ENCODE measurements at regions of chr7 and their contacts with region 1.

Region 1: GRCh38 chr7:66748822-66749221 is 8.3 kb downstream of the RABGEF1 start:
- DNase-seq: peak; percentile 67 to 88 (median 74)
- ATAC-seq: peak; percentile 90 to 96 (median 92)
- H3K4me3 ChIP-seq: no peak overlapping the region
- H3K27ac ChIP-seq: peak overlapping the region in 10 of 12 donors; percentile 5 to 64 (median 28)
- H3K4me1 ChIP-seq: peaks cover 0 to 34% (median 16%) of the 10 kb centered on the region in 12 donors
- H3K27me3 ChIP-seq: no peaks in the 10 kb centered on the region
- CTCF ChIP-seq: no peak
- POLR2A ChIP-seq: no peak

Region 2: DNA sequence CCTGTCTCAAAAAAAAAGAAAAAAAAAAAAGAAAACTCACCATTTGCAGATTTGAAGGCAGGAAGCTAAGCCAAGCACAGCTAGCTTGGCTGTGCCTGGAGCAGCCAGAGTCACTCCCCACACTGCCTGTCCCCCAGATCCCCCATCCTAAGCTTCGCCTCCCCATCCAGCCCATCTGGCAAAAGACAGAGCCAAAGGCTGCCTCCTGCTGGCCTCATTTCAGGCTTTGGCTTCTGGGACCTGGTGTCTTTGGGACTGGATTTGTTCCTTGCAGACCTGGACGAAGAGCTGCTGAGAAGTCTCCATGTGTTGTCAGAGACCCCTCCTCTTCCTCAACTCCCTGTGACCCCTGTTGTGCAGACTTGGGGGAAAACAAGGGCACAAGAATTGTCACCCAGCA is 665.1 kb before region 1 on chr7:
- intact Hi-C with region 1: loop called in 1 of 10 experiments (anchors 5 kb)
- DNase-seq: no peak
- ATAC-seq: no peak
- H3K4me3 ChIP-seq: no peak overlapping the region
- H3K27ac ChIP-seq: no peak overlapping the region
- H3K4me1 ChIP-seq: no peaks in the 10 kb centered on the region
- H3K27me3 ChIP-seq: no peaks in the 10 kb centered on the region
- CTCF ChIP-seq: no peak
- POLR2A ChIP-seq: no peak

Region 3: DNA sequence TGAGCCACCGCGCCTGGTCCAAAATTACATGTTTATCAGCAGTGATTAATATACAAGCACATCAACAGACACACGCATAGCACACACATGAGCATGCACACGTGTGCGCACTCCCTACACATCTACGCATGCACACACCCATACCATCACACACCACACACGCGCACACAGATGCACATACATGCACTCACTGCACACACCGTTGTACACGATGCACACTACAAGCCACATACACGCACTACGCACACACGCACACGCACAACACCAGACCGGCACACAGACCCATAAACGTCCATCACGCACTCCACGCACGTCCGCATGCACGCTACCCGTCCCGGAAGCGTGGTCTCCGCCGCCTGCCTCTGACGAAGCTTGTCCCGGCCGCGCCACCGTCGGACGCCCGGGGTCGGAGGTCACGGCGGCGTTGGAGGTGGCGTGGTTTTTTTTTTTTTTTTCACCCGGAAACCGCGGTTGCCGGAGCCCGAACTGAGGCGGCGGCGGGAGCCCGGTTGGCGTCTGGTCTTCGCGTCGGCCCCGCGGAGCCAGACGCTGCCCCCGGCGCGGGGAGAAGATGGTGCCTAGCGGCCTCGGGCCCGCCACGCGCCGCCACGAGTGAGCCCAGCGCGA is 172.1 kb after region 1 on chr7 and contains the start of gene TMEM248:
- intact Hi-C with region 1: no loop called
- DNase-seq: peak; percentile 91 to 96 (median 92)
- ATAC-seq: peak; percentile 94 to 98 (median 98)
- H3K4me3 ChIP-seq: peak within 1 kb of the TSS; percentile 90 to 100 (median 96)
- H3K27ac ChIP-seq: peak within 1 kb of the TSS; percentile 17 to 87 (median 77)
- H3K4me1 ChIP-seq: peaks cover 3 to 40% (median 26%) of the 10 kb centered on the region in 12 donors
- H3K27me3 ChIP-seq: no peaks in the 10 kb centered on the region
- CTCF ChIP-seq: no peak
- POLR2A ChIP-seq: peak in 1 of 2 donors; percentile 40
- total RNA-seq, gene TMEM248: 34.6 to 121 (median 55.2) TPM

Region 4: DNA sequence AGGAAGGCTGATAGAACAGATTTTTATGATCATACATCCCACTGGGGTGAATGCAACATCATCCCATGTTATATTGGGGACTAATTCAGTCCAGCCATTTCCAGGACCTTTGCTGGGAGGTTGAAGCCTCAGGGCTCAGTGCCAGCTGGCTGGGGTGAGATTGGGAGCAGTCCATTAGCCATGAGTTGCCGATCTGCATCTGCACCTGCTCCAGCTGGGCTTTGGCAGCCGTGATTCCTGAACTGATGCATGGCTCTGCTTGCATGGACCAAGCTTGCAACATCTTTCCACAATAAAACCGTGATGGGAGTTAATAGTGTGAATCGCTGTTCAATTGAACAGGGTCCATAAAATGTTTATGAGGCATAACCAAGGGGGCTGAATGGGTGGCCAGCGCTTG is 594.8 kb after region 1 on chr7:
- intact Hi-C with region 1: no loop called
- DNase-seq: peak in 2 of 5 donors; percentile 18 to 48
- ATAC-seq: peak in 1 of 4 donors; percentile 23
- H3K4me3 ChIP-seq: no peak overlapping the region
- H3K27ac ChIP-seq: no peak overlapping the region
- H3K4me1 ChIP-seq: peaks cover 0 to 6% (median 0%) of the 10 kb centered on the region in 12 donors
- H3K27me3 ChIP-seq: no peaks in the 10 kb centered on the region
- CTCF ChIP-seq: no peak
- POLR2A ChIP-seq: no peak

Measured in heart left ventricle (tissue), 16 donors.